ENCODE measurements at regions of chr9 and their contacts with region 1.

Region 1: DNA sequence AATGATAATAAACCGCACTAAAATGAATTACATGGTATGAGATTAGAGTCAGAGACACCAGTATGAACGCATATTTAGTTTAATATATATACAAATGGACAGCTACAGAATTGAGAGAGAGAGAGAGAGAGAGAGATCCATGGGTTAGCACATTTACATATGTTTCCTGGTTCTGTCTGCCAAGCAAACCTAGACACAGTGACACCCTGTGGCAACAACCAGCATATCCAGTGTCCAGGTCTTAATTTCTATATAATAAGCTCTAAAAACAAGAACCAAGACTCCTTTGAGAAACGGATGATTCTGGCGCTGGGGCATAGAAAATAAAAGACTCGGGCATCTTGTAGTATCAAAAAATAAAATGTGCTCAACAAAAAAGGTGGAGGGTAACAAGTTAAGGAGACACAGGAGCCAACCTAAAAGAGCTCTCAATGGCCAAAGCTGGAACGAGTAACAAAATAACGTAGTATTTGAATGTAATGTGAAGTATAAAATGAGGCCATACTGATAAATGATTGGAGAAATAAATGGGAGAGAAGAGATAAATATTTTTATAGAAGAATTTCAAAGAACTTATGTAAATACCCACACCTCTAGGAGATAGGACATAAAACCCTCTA is 84.5 kb downstream of the RFX3 start:
- DNase-seq: peak; percentile 37
- H3K4me3 ChIP-seq: no peak overlapping the region
- H3K27ac ChIP-seq: no peak overlapping the region
- H3K27me3 ChIP-seq: no peaks in the 10 kb centered on the region
- CTCF ChIP-seq: peak; percentile 77

Region 2: GRCh38 chr9:2677915-2678889 is 763.1 kb before region 1 on chr9:
- CTCF ChIA-PET with region 1: no interaction called
- POLR2A ChIA-PET with region 1: no interaction called
- DNase-seq: no peak
- H3K4me3 ChIP-seq: no peak overlapping the region
- H3K27ac ChIP-seq: no peak overlapping the region
- H3K27me3 ChIP-seq: no peaks in the 10 kb centered on the region
- CTCF ChIP-seq: no peak

Region 3: GRCh38 chr9:2857564-2858198 is 583.6 kb before region 1 on chr9:
- CTCF ChIA-PET with region 1: interaction called, 16 read pairs
- POLR2A ChIA-PET with region 1: no interaction called
- DNase-seq: peak; percentile 33
- H3K4me3 ChIP-seq: no peak overlapping the region
- H3K27ac ChIP-seq: no peak overlapping the region
- H3K27me3 ChIP-seq: peaks cover 13% of the 10 kb centered on the region
- CTCF ChIP-seq: peak; percentile 87

Region 4: GRCh38 chr9:2889023-2889422 is 552.3 kb before region 1 on chr9:
- CTCF ChIA-PET with region 1: no interaction called
- POLR2A ChIA-PET with region 1: no interaction called
- DNase-seq: no peak
- H3K4me3 ChIP-seq: no peak overlapping the region
- H3K27ac ChIP-seq: no peak overlapping the region
- H3K27me3 ChIP-seq: no peaks in the 10 kb centered on the region
- CTCF ChIP-seq: no peak

Region 5: DNA sequence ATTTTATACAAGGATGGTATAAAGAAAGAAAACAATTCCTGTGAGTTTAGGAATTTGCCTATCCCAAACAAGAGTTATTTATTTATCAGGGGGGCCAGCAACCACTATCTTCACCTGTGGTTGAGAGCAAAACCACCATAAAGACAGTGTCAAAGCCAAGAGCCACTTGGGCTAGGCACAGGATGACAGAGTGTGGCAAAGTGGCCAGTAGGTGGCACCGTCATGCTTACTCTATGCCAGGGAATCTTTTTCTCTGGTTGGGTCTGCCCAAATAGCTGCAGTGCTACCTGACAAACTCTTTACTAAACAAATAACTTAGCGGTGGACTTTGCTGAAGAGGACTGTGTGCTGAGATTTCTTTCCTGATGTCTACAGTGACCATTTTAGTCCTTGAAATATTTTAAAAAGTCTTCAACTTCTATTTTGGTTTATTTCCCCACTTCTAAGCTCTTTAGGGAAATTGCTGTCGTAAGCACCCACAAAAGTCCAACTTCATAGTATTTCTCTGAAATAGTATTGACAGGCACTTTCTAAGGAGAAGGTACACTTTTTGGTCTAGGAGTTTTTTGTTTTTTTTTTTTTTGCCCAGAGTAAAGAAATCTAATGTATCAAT is 200.5 kb before region 1 on chr9:
- CTCF ChIA-PET with region 1: interaction called, 166 read pairs
- POLR2A ChIA-PET with region 1: no interaction called
- DNase-seq: no peak
- H3K4me3 ChIP-seq: no peak overlapping the region
- H3K27ac ChIP-seq: no peak overlapping the region
- H3K27me3 ChIP-seq: no peaks in the 10 kb centered on the region
- CTCF ChIP-seq: peak; percentile 88

Region 6: DNA sequence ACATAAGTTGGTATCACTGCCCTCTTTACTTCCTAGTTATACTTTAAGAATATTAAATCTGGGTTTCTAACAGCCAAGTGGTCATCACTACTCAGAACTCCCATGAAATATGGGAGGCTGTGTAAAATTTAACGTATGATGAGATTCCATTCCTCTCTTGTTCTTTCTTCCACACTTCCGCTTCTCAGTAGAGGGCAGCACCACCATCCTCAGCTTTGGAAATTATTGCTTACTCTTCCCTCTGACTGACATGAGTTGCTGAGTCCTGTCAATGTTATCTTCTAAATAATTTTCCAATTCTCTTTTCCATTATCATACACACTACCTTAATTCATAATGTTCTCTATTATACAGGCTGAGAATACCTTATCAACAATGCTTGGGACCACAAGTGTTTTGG is 109.5 kb before region 1 on chr9:
- CTCF ChIA-PET with region 1: interaction called, 14 read pairs
- POLR2A ChIA-PET with region 1: no interaction called
- DNase-seq: no peak
- H3K4me3 ChIP-seq: no peak overlapping the region
- H3K27ac ChIP-seq: no peak overlapping the region
- H3K27me3 ChIP-seq: no peaks in the 10 kb centered on the region
- CTCF ChIP-seq: no peak

Region 7: DNA sequence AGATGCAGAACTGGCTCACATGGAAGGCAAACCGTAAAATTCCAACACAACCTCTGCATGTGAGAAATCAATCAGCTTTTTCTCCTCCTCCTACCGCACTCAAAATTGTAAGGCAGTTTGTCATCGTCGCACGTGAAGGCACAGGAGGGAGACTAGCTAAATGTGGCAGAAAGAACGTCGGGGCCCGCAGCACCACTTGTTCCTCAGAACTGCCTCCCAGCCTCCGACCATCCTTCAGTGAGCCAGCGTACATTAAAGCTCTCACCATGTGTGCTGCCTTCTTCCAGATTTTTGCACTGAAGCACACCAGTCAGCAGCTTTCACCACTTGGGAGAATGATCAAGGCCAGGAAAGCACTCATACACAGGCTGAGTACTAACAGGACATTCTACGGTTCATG is 21.4 kb before region 1 on chr9:
- CTCF ChIA-PET with region 1: interaction called, 11 read pairs
- POLR2A ChIA-PET with region 1: no interaction called
- DNase-seq: no peak
- H3K4me3 ChIP-seq: no peak overlapping the region
- H3K27ac ChIP-seq: no peak overlapping the region
- H3K27me3 ChIP-seq: no peaks in the 10 kb centered on the region
- CTCF ChIP-seq: no peak

Region 8: GRCh38 chr9:3458806-3459475 is 17.6 kb after region 1 on chr9:
- CTCF ChIA-PET with region 1: interaction called, 36 read pairs
- POLR2A ChIA-PET with region 1: no interaction called
- DNase-seq: no peak
- H3K4me3 ChIP-seq: no peak overlapping the region
- H3K27ac ChIP-seq: no peak overlapping the region
- H3K27me3 ChIP-seq: no peaks in the 10 kb centered on the region
- CTCF ChIP-seq: no peak